OCI-LY7 (cell line): ENCODE measurements at regions of chr1 and their contacts with region 1.

Region 1: GRCh38 chr1:166740668-166741276 is 98.5 kb upstream of the POGK start:
- DNase-seq: no peak
- H3K4me3 ChIP-seq: no peak overlapping the region
- H3K27ac ChIP-seq: no peak overlapping the region
- H3K4me1 ChIP-seq: no peaks in the 10 kb centered on the region
- CTCF ChIP-seq: no peak

Region 2: DNA sequence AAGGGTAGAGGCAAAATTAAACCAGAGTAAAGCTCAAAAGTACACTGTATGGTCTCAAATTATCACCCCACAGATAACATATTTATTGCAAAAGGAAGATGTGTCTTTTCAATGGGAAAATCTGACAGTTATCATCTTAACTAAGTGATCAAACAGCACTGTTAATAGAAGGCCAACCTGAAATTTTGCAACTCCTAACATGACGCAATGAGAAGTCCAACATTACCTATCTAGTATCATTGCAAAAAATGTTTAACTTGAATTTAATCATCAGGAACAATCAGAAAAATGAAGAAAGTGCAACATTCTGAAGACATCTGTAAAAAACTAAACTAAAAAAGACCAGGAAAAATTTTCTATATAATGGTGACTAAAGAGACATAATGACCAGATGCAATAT is 58.2 kb before region 1 on chr1:
- CTCF ChIA-PET with region 1: no interaction called
- POLR2A ChIA-PET with region 1: no interaction called
- intact Hi-C with region 1: loop called (anchors 10 kb)
- DNase-seq: no peak
- H3K4me3 ChIP-seq: no peak overlapping the region
- H3K27ac ChIP-seq: no peak overlapping the region
- H3K4me1 ChIP-seq: no peaks in the 10 kb centered on the region
- CTCF ChIP-seq: no peak

Region 3: DNA sequence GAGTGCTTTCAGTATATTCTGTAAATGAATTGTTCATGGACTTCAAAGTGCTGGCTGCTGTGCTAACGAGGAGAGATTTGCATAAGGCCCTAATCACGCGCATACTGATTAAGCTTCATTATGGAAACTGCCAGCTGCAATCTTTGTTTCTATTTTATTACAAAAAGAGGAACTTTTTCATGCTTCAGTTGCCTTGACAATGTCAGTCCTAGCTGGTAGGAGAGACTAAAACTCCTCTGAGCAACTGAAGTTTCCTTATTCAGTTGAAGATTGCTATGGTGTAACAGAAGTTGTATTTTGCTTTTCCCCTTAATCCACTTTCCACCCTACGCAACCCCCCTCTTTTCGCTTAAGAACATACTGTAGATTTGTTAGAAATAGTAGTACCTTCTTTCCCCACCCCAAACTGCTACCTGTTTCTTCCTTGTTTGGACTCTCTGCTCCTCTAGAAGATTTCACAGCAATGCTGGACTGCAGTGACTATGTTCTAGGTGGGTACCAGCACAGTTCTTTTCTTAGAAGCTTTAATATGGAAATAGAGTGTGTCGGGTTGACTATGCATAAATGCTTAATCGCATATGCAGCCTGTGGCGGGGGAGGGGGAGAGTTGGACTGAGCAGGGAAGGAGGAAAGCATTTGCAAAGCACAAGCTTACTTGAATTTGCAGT is 588.2 kb after region 1 on chr1:
- CTCF ChIA-PET with region 1: no interaction called
- POLR2A ChIA-PET with region 1: no interaction called
- intact Hi-C with region 1: no loop called
- DNase-seq: peak; percentile 98
- H3K4me3 ChIP-seq: peak overlapping the region; percentile 79
- H3K27ac ChIP-seq: peak overlapping the region; percentile 99
- H3K4me1 ChIP-seq: peaks cover 42% of the 10 kb centered on the region
- CTCF ChIP-seq: no peak